GM10248 (cell line): ENCODE measurements at regions of chr6 and their contacts with region 1.

Region 1: DNA sequence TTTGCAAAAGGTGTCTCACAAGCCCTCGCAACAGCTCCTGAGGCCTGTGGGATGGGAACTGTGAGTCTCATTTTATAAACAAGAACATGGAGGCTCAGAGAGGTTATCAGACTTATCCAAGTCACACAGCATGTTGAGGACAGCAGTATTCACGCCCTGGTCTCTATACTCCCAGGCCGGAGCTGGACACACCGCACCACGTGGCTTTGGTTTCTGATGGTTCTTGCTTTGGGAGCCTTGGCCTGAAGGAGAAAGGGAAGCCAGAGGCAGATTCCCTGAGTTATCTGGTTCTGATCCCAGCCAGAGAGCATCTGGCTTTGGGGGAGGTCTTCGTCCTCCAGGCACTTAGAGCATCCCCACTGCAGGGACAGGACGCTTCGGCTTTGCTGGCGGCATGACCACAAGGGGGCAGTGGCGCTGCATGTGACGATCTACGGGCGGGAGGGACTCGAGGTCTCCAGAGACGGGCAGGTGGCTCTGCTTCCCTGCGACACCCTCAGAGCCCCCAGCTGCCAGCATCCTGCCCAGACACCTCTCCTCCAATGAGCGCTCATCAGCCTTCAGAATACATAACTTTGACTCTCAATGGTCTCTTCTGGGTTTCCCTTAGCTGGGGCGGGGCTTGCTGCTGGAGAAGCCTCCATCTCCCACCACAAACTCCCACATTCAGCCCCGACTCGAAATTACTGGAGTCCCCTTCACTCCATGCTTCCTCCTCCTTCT is 51.4 kb upstream of the SAYSD1 start:
- DNase-seq: peak; percentile 85
- CTCF ChIP-seq: peak; percentile 96

Region 2: DNA sequence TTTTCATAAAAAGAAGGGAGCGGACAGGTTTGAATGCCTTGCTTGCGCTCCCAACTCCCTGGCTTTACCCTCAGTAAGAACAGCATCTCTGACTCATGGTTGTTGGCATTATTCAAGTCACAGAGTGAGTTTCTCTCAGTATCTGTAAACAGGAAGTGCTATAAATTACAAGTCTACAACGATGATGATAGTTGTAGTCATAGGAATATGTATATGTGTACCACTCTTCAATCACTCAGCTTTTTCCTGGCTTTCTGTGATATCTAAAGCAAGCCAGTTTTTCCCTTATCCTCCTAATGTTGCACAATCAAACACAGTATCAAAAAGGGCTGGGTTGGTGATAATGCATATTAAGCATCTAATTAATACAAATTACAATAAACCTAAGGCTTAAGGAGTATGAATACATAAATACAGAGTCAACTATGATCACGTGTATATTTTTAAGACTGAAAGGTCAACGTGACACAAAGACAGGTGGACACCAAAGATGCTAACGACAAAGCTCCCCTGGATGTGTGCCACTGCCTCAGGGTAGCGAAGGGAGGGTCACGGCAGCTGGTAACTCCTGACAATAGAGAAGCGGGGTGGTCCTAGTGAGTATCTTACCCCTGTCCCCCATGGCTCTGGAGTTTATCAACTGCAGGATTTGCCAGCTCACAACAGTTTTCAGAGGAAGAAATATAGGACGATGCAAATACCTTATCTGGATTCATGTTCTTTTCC is 729.5 kb before region 1 on chr6:
- CTCF ChIA-PET with region 1: no interaction called
- POLR2A ChIA-PET with region 1: no interaction called
- DNase-seq: no peak
- CTCF ChIP-seq: no peak

Region 3: DNA sequence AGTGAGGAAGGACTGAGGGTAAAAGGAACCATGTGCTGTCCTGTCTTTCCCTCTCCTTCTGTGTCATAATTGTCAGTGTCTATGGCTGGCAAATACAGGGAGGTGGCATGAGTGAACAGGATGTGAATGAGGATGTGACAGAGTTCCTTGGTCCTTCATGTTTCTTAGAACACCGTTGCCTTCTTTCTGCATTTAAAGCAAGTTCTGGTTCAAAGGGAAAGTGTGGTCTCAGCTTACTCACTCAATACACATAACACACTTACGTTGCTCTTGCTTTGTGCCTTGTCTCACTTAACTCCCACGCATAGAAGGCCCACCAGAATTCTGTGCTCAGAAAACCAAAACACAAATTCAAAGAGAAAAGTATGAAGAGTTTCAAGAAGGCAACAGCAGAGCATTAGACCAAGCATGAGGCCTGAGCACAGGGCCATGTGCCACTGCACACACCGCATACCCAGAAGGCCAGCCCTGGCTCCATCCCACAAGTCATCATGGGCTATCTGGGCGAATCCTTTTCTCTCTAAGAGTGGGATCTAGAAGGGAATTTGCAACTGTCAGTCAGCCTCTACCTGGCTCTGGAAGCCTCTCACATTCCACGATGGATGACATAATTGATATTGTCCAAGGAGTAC is 12.5 kb before region 1 on chr6:
- CTCF ChIA-PET with region 1: interaction called, 16 read pairs
- POLR2A ChIA-PET with region 1: no interaction called
- DNase-seq: no peak
- CTCF ChIP-seq: no peak

Region 4: GRCh38 chr6:39189915-39190544 is 23.7 kb after region 1 on chr6:
- CTCF ChIA-PET with region 1: interaction called, 22 read pairs
- POLR2A ChIA-PET with region 1: no interaction called
- DNase-seq: peak; percentile 63
- CTCF ChIP-seq: peak; percentile 51

Region 5: GRCh38 chr6:39196673-39197091 is 30.3 kb after region 1 on chr6:
- CTCF ChIA-PET with region 1: interaction called, 12 read pairs
- POLR2A ChIA-PET with region 1: no interaction called
- DNase-seq: no peak
- CTCF ChIP-seq: no peak